ENCODE measurements at regions of chr11 and their contacts with region 1.

Region 1: DNA sequence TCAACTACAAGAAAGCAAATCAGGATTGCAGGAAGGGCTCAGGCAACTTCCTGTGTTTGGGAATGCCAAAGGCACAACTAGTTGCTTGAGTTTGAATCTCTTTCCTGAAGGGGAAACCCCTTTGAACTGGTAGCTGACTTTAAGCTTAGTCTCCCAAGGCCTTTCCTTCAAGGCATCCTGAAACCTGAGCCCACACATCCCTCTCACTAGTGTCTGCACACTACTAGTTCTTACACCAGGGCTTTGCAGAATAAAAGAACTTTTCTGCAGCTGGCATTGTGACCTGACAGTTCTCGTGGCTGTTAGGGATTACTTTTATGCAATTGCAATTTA is 95.4 kb downstream of the EXT2 start:
- DNase-seq: no peak
- ATAC-seq: peak; percentile 71
- H3K4me3 Mint-ChIP-seq: no peak overlapping the region
- H3K27ac Mint-ChIP-seq: peak overlapping the region; percentile 93
- H3K4me1 Mint-ChIP-seq: peaks cover 27% of the 10 kb centered on the region
- H3K27me3 Mint-ChIP-seq: no peaks in the 10 kb centered on the region; the same call in 1 of the 2 replicates
- CTCF ChIP-seq: no peak

Region 2: GRCh38 chr11:44178381-44178780 is 12.5 kb before region 1 on chr11:
- CTCF ChIA-PET with region 1: interaction called, 10 read pairs
- POLR2A ChIA-PET with region 1: no interaction called
- DNase-seq: no peak
- ATAC-seq: peak; percentile 80
- H3K4me3 Mint-ChIP-seq: no peak overlapping the region
- H3K27ac Mint-ChIP-seq: peak overlapping the region; percentile 16; the same call in 1 of the 2 replicates
- H3K4me1 Mint-ChIP-seq: peaks cover 15% of the 10 kb centered on the region
- H3K27me3 Mint-ChIP-seq: no peaks in the 10 kb centered on the region
- CTCF ChIP-seq: no peak

Region 3: GRCh38 chr11:44286268-44286880 is 95.5 kb after region 1 on chr11:
- CTCF ChIA-PET with region 1: interaction called, 10 read pairs
- POLR2A ChIA-PET with region 1: no interaction called
- DNase-seq: peak; percentile 83
- ATAC-seq: peak; percentile 89
- H3K4me3 Mint-ChIP-seq: no peak overlapping the region
- H3K27ac Mint-ChIP-seq: no peak overlapping the region
- H3K4me1 Mint-ChIP-seq: peaks cover 5% of the 10 kb centered on the region; the same call in 1 of the 2 replicates
- H3K27me3 Mint-ChIP-seq: no peaks in the 10 kb centered on the region
- CTCF ChIP-seq: peak; percentile 92

Measured in WTC11 (cell line).